ENCODE measurements at regions of chr3 and their contacts with region 1.

Region 1: GRCh38 chr3:134373994-134374790 is at the start of gene AMOTL2:
- DNase-seq: peak; percentile 29
- H3K4me3 Mint-ChIP-seq: peak within 1 kb of the TSS; percentile 66
- H3K27ac Mint-ChIP-seq: no peak within 1 kb of the TSS
- H3K4me1 Mint-ChIP-seq: peaks cover 8% of the 10 kb centered on the region
- H3K27me3 Mint-ChIP-seq: peaks cover 32% of the 10 kb centered on the region
- total RNA-seq, gene AMOTL2: 0.12 to 0.39 TPM

Region 2: GRCh38 chr3:134197681-134198261 is 176.4 kb before region 1 on chr3:
- CTCF ChIA-PET with region 1: interaction called, 3 read pairs
- POLR2A ChIA-PET with region 1: no interaction called
- intact Hi-C with region 1: loop called (anchors 5 kb)
- DNase-seq: no peak
- H3K4me3 Mint-ChIP-seq: no peak overlapping the region
- H3K27ac Mint-ChIP-seq: no peak overlapping the region
- H3K4me1 Mint-ChIP-seq: peaks cover 10% of the 10 kb centered on the region
- H3K27me3 Mint-ChIP-seq: no peaks in the 10 kb centered on the region